ENCODE measurements at regions of chr3 and their contacts with region 1.

Region 1: DNA sequence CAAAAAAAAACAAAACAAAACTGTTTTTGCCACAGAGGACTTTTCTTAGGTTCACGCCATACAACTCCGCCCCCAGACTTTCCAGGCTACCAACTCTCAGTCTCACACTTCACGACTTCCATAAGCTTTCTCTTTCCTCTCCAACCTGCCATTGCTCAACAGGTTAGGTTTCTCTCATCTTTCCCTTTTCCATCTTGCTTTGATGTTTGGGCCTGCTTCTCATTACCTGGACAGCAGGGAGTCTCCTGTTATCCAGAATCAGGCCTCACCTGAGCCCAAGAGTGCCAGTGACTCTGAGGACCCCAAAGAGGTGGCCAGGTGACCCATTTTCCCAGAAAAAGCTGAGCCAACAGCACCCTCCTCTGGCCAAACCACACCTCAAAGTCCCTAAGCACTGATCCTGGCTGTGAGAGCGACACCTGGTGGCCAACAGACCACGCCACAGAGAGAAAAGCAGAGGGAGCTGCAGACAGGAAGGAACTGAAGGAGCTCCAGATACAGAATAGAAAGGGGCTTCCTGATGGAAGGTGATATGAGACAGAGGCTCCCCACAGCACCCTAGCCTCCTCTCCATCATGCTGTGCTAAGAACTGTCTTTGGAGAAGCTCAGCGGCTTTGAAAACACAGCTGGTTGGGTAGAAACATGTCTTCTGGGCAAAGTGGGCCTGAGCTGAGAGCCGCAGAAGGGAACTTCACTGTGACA is 4.0 kb downstream of the CCDC51 start:
- DNase-seq: peak; percentile 90
- ATAC-seq: peak; percentile 55

Region 2: DNA sequence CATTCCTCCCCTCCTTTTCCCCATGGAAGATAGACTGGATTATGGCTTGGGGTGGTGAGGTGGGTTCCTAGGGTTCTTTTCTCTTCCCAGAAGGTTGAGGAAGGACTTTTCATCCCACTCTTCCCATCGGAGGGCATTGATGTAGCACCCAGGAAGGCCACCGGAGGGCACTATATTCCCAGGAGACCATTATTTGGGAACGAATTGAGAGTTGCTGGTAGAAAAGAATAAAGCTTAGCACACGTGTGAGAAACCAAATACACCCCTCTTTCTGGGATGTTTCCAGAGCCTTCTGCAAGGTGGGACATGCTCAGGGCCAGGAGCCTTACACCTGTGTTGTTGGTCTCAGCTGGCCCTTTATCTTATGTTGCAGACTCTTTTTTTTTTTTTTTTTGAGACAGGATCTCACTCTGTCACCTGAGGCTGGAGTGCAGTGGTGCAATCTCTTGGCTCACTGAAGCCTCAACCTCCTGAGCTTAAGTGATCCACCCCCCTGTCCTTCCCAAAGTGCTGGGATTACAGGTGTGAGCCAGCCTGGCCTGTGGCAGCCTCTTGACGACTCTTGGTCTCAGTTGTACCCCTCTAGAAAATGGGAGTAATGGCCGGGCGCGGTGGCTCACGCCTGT is 241.4 kb before region 1 on chr3:
- intact Hi-C with region 1: loop called (anchors 2 kb)
- DNase-seq: no peak
- ATAC-seq: peak; percentile 64

Region 3: DNA sequence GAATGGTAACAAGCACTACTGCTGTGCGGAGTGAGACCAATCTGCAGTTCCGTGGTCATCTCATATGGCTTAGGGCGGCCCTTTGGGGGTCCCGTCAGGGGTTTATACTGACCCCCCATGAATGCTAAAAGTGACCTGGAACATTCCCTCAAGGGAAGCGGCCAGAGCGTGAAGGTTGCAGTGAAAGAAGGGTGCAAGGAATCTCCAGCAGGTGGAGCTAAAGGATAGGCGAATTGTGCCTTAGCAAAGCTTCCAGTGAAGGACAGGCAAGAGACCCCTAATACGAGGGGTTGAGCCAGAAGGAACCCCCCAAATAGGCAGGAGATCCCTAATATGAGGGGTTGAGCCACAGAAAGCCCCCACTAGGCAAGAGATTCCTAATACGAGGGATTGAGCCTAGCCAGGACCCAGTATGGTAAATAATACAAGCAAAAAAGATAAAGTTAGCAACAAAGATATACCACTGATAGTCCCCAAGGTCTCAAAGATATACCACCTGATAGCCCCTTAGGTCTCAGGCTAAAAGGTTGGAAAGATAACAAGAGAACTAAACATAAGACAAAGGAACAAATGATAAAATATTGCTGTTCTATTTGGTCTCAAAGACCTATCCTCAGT is 162.2 kb before region 1 on chr3:
- intact Hi-C with region 1: loop called (anchors 1 kb)
- DNase-seq: no peak
- ATAC-seq: peak; percentile 58

Region 4: DNA sequence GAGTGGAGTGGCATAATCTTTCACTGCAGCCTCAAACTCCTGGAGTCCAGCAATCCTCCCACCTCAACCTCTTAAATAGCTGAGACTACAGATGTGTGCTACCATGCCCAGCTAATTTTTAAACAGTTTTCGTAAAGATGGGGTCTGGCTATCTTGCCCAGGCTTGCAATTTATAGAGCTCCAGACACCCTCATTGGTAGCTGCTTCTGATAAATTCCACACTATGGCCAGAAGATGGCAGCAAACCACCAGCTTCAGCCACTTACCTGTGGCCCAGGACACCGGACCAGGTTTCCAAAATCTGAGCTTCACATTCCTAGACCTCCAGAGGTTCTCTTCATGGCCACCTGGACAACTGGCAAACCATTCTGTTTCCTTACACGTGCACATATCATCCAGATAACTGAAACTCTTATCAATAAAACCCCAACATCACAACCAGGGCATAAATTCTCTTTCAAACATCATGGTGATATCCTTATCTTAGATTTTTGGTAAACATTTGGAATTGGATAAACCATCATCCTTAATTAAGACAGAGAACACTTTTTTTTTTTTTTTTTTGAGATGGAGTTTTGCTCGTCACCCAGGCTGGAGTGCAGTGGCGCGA is 35.0 kb before region 1 on chr3:
- intact Hi-C with region 1: loop called (anchors 1 kb)
- DNase-seq: no peak
- ATAC-seq: no peak

Region 5: DNA sequence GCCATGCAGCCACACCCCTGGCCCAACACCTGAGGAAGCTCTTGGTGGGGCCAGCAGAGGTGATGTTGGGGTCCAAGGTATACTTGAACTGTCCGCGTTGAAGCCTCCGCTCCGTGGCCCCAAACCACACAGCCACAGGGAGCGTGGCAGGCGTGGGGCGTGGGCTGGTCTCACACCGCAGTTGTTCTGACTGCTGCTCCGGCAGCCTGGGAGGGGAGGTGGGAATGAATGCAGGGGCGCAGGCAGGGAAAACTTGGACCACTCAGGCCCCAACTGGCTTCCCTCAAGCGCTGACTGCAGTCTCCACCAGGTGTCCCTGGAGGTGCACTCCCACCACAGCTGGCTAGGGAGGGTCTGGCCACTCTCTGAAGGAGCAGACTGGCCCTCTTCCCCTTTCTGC is 20.4 kb before region 1 on chr3:
- intact Hi-C with region 1: no loop called
- DNase-seq: peak; percentile 43
- ATAC-seq: no peak

Region 6: DNA sequence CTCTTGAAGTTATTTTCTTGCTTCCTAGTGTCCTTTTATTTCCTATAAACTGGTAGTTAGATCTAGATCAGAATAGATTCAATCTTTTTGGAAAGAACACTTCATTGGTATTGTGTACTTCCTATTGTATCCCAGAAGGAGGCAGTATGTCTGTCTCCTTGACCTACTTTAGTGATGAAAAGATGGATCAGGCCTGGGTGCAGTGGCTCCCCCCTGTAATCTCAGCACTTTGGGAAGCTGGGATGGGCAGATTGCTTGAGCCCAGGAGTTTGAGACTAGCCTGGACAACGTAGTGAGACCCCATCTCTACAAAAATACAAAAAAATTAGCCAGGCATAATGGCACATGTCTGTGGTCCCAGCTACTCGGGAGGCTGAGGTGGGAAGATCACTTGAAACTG is 1130.4 kb after region 1 on chr3:
- intact Hi-C with region 1: no loop called
- DNase-seq: no peak
- ATAC-seq: no peak